ENCODE measurements at regions of chr7 and their contacts with region 1.

Region 1: GRCh38 chr7:129433847-129434674 is at the start of gene STRIP2:
- DNase-seq: peak; percentile 99
- H3K4me3 Mint-ChIP-seq: peak within 1 kb of the TSS; percentile 92
- H3K27ac Mint-ChIP-seq: peak within 1 kb of the TSS; percentile 90
- H3K4me1 Mint-ChIP-seq: peaks cover 32% of the 10 kb centered on the region
- H3K27me3 Mint-ChIP-seq: peaks cover 6% of the 10 kb centered on the region
- total RNA-seq, gene STRIP2: 86.6 and 89.6 TPM in 2 replicates

Region 2: GRCh38 chr7:127858091-127858914 is 1575.8 kb before region 1 on chr7:
- intact Hi-C with region 1: loop called (anchors 10 kb)
- DNase-seq: peak; percentile 58
- H3K4me3 Mint-ChIP-seq: no peak overlapping the region
- H3K27ac Mint-ChIP-seq: peak overlapping the region; percentile 68
- H3K4me1 Mint-ChIP-seq: peaks cover 50% of the 10 kb centered on the region
- H3K27me3 Mint-ChIP-seq: peaks cover 2% of the 10 kb centered on the region

Region 3: GRCh38 chr7:129367700-129368388 is 66.2 kb before region 1 on chr7:
- intact Hi-C with region 1: loop called (anchors 1 kb)
- DNase-seq: peak; percentile 93
- H3K4me3 Mint-ChIP-seq: peak overlapping the region; percentile 73
- H3K27ac Mint-ChIP-seq: peak overlapping the region; percentile 89
- H3K4me1 Mint-ChIP-seq: peaks cover 37% of the 10 kb centered on the region
- H3K27me3 Mint-ChIP-seq: no peaks in the 10 kb centered on the region

Region 4: GRCh38 chr7:129421717-129422250 is 12.3 kb before region 1 on chr7:
- intact Hi-C with region 1: loop called (anchors 1 kb)
- DNase-seq: no peak
- H3K4me3 Mint-ChIP-seq: no peak overlapping the region
- H3K27ac Mint-ChIP-seq: no peak overlapping the region
- H3K4me1 Mint-ChIP-seq: peaks cover 3% of the 10 kb centered on the region
- H3K27me3 Mint-ChIP-seq: no peaks in the 10 kb centered on the region

Region 5: DNA sequence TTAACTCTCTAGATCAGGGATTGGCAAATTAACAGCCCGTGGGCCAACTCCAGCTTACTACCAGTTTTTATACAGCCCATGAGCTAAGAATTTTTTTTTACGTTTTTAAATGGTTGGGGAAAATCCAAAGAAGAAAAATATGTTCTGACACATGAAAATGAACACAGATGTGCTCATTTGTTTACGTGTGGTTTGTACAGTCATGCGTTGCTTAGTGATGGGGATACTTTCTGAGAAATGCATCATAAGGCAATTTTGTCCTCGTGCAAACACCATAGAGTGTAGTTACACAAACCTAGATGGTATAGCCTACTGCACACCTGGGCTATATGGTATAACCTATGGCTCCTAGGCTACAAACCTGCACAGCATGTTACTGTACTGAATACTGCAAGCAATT is 60.0 kb after region 1 on chr7:
- intact Hi-C with region 1: loop called (anchors 2 kb)
- DNase-seq: peak; percentile 78
- H3K4me3 Mint-ChIP-seq: no peak overlapping the region
- H3K27ac Mint-ChIP-seq: peak overlapping the region; percentile 83
- H3K4me1 Mint-ChIP-seq: peaks cover 29% of the 10 kb centered on the region
- H3K27me3 Mint-ChIP-seq: no peaks in the 10 kb centered on the region

Region 6: GRCh38 chr7:129611246-129612111 is 177.4 kb after region 1 on chr7 and contains the start of gene NRF1:
- intact Hi-C with region 1: loop called (anchors 2 kb)
- DNase-seq: peak; percentile 98
- H3K4me3 Mint-ChIP-seq: peak within 1 kb of the TSS; percentile 93
- H3K27ac Mint-ChIP-seq: peak within 1 kb of the TSS; percentile 95
- H3K4me1 Mint-ChIP-seq: peaks cover 46% of the 10 kb centered on the region
- H3K27me3 Mint-ChIP-seq: no peaks in the 10 kb centered on the region
- total RNA-seq, gene NRF1: 22.3 and 23.2 TPM in 2 replicates